ENCODE measurements at regions of chr5 and their contacts with region 1.

Region 1: DNA sequence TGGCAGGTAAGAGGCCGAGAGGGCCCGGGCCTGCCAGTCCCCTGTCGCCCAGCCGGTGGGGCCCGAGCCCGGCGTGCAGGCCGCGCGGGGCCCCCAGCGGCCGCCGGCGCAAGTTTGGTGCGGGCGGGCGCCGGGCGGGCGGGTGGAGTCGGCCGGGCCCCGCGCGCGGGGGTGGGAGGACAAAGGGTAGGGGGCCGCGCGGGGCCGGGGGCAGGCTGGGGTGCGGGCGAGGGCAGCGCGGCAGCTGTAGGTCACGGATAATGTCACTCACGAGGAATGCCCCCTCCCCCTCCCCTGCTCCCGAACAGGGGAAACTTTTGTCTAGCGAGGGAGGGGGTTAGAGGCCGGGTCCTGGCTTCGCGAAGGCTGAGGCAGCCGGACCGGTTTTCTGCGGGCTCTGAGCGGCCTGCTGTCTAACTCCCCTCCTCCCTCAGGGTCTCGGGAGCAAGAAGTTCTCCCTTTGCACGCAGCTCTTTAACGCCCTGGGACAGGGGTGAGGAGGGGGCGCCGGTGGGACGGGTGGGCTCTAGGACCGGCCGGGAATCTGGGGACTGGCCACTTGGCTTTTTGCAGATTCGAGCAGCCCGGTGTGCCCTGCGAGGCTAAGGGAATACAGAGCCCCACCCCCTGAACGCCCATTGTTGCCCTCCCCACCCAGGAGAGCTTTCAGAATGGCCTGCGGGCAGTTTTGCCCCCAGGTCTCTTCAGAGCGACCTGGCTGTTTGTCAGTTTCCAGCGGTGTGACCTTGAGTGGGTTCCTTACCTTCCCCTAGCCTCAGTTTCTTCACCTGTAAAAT is 21.3 kb upstream of the NDST1 start:
- DNase-seq: peak in 1 of 2 donors; percentile 80
- H3K4me3 ChIP-seq: peak overlapping the region; percentile 87 to 98
- H3K27ac ChIP-seq: peak overlapping the region; percentile 95 to 97
- H3K4me1 ChIP-seq: peaks cover 44 to 50% of the 10 kb centered on the region in 2 donors
- H3K27me3 ChIP-seq: no peaks in the 10 kb centered on the region
- CTCF ChIP-seq: no peak

Region 2: GRCh38 chr5:150066901-150067396 is 419.7 kb before region 1 on chr5:
- intact Hi-C with region 1: no loop called
- DNase-seq: no peak
- H3K4me3 ChIP-seq: no peak overlapping the region
- H3K27ac ChIP-seq: peak overlapping the region in 1 of 2 donors; percentile 16
- H3K4me1 ChIP-seq: peaks cover 0 to 4% of the 10 kb centered on the region in 2 donors
- H3K27me3 ChIP-seq: no peaks in the 10 kb centered on the region
- CTCF ChIP-seq: no peak

Region 3: DNA sequence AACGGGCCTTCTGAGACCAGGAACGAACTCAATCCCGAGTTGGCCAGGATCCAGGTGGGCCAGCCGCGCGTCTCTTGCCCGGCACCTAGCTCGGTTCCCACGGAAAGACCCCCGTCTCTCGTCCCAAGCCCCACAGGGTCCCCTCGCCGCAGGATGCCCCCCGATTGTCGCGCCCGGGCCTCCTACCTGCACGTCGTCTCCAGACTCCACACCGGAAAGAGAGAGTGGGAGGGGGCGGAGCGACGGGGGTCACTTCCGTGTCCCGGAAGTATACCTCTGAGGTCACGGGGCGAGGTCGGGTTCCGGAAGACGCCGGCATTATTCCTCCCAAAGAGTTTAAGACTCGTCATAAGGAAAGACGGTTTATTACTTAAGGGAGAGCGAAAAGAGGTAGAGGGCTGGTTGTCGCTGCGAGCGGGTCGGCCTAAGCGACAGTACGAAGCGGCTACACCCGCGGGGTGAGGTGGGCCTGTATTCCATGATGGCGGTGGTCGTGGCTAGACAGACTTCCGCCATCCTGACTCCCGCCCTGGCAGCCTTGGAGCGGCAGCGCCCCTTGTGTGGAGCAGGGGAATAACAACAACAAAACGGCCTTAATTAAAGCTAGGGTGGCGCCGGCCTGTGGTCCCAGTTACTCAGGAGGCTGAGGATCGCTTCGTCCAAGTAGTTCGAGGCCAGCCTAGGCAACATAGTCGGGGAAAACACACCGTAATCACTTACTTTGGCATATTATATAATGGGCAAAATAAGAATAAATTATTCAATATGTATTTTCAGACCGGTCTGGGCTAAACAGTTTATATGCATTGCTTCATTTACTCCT is 36.9 kb before region 1 on chr5 and contains the start of gene RPS14:
- intact Hi-C with region 1: loop called (anchors 5 kb)
- DNase-seq: peak; percentile 78 to 94
- H3K4me3 ChIP-seq: peak within 1 kb of the TSS; percentile 67 to 71
- H3K27ac ChIP-seq: peak within 1 kb of the TSS; percentile 93 to 94
- H3K4me1 ChIP-seq: peaks cover 4 to 10% of the 10 kb centered on the region in 2 donors
- H3K27me3 ChIP-seq: no peaks in the 10 kb centered on the region
- CTCF ChIP-seq: peak; percentile 90 to 96 (median 94)
- total RNA-seq, gene RPS14: 1,928 TPM

Region 4: DNA sequence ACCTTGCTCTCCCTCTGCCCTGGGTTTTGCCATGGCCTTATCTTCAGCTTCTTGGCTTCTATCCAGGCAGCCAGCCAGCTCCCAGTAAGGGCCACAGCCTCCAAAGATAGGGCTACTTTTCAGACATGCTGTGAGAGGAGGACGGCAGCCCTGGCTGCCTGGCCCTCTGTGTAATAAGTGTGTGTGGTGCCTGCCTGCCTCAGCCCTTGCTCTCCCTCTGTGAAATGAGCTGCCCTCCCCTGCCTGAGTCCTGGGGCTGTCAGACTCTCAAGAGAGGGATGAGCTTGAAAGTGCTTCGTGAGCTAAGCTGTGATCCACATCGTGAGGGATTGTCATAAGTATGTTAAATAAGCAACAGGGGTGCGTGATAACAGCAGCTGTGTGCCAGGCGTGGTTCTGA is 29.4 kb after region 1 on chr5:
- intact Hi-C with region 1: loop called (anchors 1 kb)
- DNase-seq: peak in 1 of 2 donors; percentile 74
- H3K4me3 ChIP-seq: no peak overlapping the region
- H3K27ac ChIP-seq: peak overlapping the region; percentile 78 to 87
- H3K4me1 ChIP-seq: peaks cover 24 to 69% of the 10 kb centered on the region in 2 donors
- H3K27me3 ChIP-seq: no peaks in the 10 kb centered on the region
- CTCF ChIP-seq: no peak

Region 5: DNA sequence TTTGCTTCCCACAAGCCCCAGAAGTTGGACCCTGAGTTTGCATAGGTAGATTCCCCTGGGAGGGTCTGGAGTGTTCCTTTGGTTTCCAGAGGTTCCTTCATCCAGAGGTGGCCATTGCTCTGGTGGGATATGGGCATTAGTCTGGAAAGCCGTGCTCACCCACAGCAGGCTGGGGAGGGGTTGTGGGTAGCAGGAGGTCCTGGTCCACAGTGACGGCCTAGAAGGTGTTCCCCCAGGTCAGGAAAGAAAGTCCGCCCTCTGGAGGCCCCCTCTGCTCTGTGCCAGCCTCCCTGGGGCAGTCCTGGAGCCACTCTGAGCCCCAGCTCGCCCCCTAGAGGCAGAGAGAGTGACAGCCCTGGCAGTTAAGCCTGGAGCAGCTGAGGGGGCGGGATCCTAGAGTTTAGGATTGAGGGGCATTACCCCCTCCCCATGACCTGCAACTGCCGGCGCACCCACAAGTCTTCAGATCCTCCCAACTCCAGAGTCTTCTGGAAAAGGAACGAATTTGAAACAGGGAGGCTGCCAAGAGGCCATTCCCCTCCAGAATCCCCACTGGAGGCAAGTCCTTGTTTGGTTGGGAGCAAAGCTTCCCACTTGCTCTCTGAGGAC is 58.1 kb after region 1 on chr5:
- intact Hi-C with region 1: loop called (anchors 2 kb)
- DNase-seq: peak in 1 of 2 donors; percentile 78
- H3K4me3 ChIP-seq: no peak overlapping the region
- H3K27ac ChIP-seq: peak overlapping the region; percentile 73 to 90
- H3K4me1 ChIP-seq: peaks cover 6 to 21% of the 10 kb centered on the region in 2 donors
- H3K27me3 ChIP-seq: no peaks in the 10 kb centered on the region
- CTCF ChIP-seq: peak; percentile 58 to 62 (median 61)

Measured in ascending aorta (tissue), 2 donors.